Left cardiac atrium (tissue), 4 donors: ENCODE measurements at regions of chr11 and their contacts with region 1.

Region 1: GRCh38 chr11:75328426-75329277 is 22.8 kb downstream of the ARRB1 start:
- DNase-seq: peak; percentile 72
- ATAC-seq: peak; percentile 71 to 83

Region 2: GRCh38 chr11:75280227-75280701 is 48.4 kb before region 1 on chr11:
- intact Hi-C with region 1: loop called in 1 of 2 experiments (anchors 5 kb)
- DNase-seq: peak; percentile 81
- ATAC-seq: peak; percentile 75 to 85

Region 3: GRCh38 chr11:75388386-75389275 is 60.0 kb after region 1 on chr11:
- intact Hi-C with region 1: loop called (anchors 1 to 5 kb)
- DNase-seq: peak; percentile 73
- ATAC-seq: peak; percentile 60 to 74

Region 4: GRCh38 chr11:75413864-75414263 is 85.2 kb after region 1 on chr11:
- intact Hi-C with region 1: no loop called
- DNase-seq: no peak
- ATAC-seq: no peak